Tibial artery (tissue), 4 donors: ENCODE measurements at regions of chr13 and their contacts with region 1.

Region 1: DNA sequence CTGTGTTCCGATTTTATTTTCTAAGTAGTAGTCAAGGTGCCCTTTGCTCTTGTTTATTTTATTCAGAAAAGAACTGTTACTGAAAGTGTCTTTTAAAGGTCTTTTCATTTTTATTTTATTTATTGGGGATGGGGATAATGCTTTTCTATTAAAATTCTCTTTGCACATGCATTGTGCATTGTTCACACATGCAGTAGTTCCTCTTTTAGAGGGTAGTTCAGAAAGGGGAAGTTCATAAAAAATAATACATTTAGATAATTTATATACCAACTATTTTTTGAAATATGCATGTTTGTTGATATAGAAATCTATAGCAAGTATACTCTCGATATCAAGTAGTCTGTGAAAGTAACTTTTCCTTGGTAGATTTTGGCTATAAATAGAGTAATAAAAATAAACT is 3.5 kb downstream of the GPC5 start:
- DNase-seq: no peak
- H3K4me3 ChIP-seq: no peak overlapping the region
- H3K27ac ChIP-seq: no peak overlapping the region
- H3K4me1 ChIP-seq: peaks cover 0 to 15% (median 12%) of the 10 kb centered on the region in 4 donors
- H3K27me3 ChIP-seq: peaks cover 0 to 4% of the 10 kb centered on the region in 2 donors
- CTCF ChIP-seq: no peak

Region 2: DNA sequence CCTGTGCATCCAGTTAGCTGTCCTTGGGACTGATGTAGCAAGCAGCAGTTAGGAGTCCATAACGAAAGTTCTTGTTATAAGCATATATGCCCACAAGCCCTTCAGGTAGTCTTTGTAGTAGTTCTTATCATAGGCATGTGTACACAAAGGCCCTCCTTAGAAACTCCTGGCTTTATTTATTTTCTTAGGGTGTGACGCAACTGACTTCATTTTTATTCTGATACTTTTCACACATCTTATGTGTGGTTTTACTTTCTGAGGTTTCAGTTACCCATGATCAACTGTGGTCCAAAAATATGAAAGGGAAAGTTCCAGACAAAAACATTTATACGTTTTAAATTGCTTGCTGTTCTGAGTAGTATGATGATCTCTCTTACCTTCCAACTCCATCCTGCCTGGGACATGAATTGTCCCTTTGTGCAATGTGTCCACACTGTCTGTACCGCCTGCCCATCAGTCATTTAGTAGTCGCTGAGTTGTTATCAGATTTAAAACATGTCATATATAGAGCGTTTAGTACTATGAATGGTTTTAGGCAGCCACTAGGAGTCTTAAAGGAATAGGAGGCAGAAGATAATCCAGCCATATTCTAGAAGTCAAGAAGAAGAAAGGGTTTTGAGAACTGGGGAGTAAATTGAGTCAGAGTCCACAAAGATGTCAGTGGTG is 15.9 kb after region 1 on chr13:
- intact Hi-C with region 1: loop called (anchors 2 kb)
- DNase-seq: no peak
- H3K4me3 ChIP-seq: no peak overlapping the region
- H3K27ac ChIP-seq: no peak overlapping the region
- H3K4me1 ChIP-seq: no peaks in the 10 kb centered on the region
- H3K27me3 ChIP-seq: no peaks in the 10 kb centered on the region
- CTCF ChIP-seq: no peak